HEK293 (cell line): ENCODE measurements at regions of chr2 and their contacts with region 1.

Region 1: DNA sequence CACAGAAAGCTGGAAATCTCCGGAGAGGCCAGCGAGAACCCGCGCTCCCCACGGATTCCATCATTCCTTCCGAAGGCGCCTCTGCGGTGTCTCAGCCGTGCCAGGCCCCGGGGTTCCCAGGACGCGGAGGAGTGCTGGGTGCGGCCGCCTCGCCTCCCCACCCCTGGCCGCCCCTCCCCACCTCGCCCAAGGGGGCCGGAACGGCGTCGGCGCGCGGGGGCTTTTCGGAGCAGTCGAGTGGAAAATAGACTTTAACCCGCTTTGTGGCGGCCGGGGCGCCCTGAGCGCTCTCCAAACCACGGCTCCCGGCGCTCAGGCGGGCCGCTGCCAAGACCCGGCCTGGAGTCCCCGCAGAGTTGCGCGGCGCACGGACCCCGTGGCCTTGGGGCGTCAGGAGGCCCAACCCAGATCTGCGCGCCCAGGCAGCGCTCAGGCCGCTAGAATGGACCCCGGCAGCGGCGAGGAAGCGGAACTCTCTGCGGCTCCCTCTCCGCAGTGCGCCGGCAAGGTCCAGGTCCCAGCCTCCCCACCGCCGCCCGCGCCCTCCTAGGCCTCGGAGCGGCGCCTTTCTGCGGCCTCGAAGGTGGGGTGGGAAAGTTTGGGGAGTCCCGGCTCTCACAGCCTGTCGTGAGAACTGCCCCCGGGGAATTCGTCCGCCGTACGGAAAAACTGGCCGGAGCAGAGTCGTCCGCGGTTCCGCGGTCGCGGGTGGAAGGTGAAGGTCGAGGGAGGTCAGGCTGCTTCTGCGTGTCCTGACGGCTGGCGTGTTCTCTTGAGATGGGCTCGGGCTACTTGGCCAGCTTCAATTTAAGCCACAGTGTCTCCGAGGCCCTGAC is 1.2 kb upstream of the EMX1 start:
- H3K4me3 ChIP-seq: peak overlapping the region; percentile 25
- H3K27ac ChIP-seq: no peak overlapping the region
- H3K4me1 ChIP-seq: no peaks in the 10 kb centered on the region
- CTCF ChIP-seq: no peak

Region 2: GRCh38 chr2:72934683-72935610 is 18.8 kb after region 1 on chr2:
- CTCF ChIA-PET with region 1: interaction called, 10 read pairs
- POLR2A ChIA-PET with region 1: interaction called, 3 read pairs
- H3K4me3 ChIP-seq: no peak overlapping the region
- H3K27ac ChIP-seq: no peak overlapping the region
- H3K4me1 ChIP-seq: no peaks in the 10 kb centered on the region
- CTCF ChIP-seq: peak; percentile 68

Region 3: DNA sequence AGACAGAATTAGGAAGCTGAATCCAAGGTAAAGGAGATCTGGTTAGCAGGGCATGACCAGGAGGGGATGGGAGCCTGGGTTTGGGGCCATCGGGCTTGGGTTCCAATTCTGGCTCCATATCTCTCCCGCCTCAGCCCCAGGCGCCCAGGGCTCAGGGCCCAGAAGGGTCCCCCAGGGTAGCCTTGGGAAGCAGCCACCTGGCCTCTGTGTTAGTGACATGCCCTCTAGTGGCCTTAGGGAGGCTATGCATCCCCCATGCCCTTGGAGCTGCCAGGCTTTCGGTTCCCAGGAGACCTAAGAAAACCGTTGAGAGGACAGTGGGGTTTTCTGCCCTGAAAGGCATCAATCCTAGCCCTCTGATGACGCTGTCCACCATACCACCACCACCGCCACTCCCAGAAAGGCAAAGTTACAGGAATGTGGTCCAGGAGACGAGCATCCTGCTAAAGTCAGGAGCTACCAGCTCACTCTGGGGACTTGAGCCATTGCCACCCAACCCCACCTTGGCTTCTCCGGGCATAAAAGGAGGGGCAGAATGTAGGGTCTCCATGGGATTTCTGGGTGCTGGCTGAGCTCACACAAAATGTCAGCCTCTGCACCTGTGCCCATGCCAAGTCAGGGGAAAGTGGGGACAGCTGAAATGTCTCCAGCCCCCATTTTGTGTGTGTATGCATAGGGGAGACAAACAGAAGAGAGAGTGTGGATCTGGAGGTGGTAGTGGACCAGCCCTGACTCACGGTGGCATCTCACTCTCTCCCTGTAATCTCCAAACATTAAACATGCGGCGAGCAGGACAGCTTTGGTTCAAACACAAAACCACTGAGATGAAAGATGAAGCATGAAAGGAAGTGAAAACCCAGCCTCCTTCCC is 57.7 kb after region 1 on chr2:
- CTCF ChIA-PET with region 1: interaction called, 11 read pairs
- POLR2A ChIA-PET with region 1: no interaction called
- H3K4me3 ChIP-seq: no peak overlapping the region
- H3K27ac ChIP-seq: no peak overlapping the region
- H3K4me1 ChIP-seq: no peaks in the 10 kb centered on the region
- CTCF ChIP-seq: peak; percentile 68

Region 4: DNA sequence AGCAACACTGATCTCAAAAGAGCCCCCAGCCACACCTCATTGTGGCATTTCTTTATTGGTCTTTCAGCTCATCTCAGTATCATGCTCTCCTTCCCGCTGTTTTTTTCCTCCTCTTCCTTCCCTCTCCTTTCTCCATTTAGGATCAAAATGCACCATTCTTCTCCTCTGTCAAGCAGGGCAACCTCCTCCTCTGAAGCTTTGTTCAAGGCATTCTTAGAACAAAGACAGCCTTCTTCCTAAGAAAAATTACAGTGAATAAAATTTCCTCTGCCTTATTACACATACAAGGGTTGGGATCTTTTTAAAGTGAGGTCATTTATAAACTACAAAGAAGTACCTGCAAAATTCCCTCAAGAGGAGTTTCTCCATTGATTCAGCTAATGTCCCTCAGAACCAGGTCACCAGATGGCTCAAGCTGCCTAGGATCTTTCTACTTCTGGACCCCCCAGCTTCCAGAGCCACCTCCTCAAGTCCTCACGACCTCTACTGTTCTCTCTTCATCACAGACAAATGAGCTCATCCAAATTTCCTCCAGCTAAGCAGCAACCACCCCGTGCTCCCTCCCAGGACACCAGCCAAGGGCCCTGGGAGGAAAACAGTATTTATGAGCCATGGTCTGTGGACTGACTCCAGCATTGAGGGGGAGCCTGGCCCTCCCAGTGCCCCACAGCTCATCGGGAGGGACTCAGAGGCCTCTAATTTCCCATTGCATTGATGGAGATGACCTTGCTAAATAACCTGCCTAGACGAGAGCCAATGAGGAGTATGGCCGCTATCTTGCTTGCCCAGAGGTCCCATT is 137.4 kb after region 1 on chr2:
- CTCF ChIA-PET with region 1: no interaction called
- POLR2A ChIA-PET with region 1: no interaction called
- H3K4me3 ChIP-seq: no peak overlapping the region
- H3K27ac ChIP-seq: no peak overlapping the region
- H3K4me1 ChIP-seq: no peaks in the 10 kb centered on the region
- CTCF ChIP-seq: no peak